A549 (cell line): ENCODE measurements at regions of chr17 and their contacts with region 1.

Region 1: GRCh38 chr17:48954300-48954755 is 9.7 kb upstream of the SNF8 start:
- DNase-seq: peak; percentile 66 to 91
- ATAC-seq: peak; percentile 94 to 98
- H3K4me3 ChIP-seq: 0 out of 3 replicates have a peak overlapping the region, but pooled peaks have one; percentile 12
- H3K27ac ChIP-seq: peak overlapping the region; percentile 78 to 82
- H3K4me1 ChIP-seq: peaks cover 49% of the 10 kb centered on the region
- CTCF ChIP-seq: peak; percentile 98
- EP300 ChIP-seq: no peak
- POLR2A ChIP-seq: no peak
- RAD21 ChIP-seq: peak; percentile 99 to 100

Region 2: DNA sequence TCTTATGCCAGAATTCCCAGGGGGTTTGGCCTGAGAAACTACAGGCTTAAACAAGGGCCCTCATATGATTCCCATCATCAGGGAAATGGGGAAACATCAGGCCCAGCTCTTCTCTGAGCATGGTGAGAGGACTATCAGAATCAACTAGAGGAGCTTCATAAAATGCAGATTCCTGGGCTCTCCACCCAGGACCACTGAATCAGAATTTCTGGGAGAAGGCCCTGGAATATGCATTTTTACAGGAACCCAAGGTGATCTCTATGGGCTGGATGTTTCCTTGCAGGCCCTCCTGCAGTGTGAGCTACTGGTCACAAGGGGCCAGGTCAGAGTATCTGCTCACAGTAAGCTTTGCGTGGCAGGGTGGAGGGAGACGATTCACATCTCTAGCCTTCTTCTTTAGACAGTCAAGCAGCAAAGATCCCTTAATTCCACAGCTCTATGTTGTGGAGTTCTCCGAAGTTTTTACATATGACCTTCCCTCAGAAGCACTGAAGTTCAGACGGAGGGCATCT is 187.0 kb before region 1 on chr17:
- CTCF ChIA-PET with region 1: no interaction called
- POLR2A ChIA-PET with region 1: no interaction called
- DNase-seq: no peak
- ATAC-seq: peak; percentile 65 to 83; a peak in 3 of 6 replicates
- H3K4me3 ChIP-seq: no peak overlapping the region
- H3K27ac ChIP-seq: no peak overlapping the region
- H3K4me1 ChIP-seq: no peaks in the 10 kb centered on the region
- CTCF ChIP-seq: no peak
- EP300 ChIP-seq: no peak
- POLR2A ChIP-seq: no peak
- RAD21 ChIP-seq: no peak

Region 3: DNA sequence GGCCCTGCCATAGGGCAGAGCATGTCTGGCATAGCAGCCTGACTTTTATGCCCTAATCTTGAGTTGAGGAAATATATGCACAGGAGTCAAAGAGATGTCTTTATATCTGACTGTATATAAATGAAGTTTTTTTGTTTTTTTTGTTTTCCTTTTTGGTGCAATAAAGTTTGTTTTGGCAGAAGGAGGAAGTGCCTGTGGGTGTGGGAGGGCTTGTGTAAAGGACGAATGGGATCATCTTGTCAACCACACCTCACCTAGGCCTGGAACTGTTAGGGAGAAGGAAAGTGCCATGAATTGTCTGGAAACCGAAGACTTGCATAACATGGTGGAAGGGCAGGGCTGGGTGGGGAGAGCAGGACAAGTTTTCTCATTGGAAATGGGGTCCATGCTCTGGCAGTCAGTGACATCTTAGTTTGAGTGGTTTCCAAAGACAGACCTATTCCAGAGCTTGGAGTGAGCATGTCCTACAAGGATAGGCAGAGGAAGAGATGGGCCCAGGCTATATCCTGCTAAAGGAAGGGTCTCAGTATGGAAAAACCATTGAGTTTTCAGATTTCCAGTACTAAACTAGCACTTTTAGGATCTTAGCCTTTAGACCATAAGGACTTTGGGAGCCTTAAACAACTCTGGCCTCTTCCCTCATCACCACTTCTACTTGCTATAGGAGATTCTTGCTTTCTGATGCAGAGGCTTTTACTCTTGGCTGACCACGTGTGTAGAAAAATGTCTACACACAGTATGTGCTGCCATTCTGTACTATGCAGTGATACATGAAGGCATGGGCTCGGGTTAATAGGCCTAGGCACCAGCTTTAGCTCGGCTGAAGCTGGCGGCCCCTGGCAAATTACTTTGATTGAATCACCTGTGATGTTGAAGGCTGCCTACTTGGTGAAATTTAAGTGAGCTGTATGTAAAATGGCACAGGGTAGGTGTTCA is 25.2 kb before region 1 on chr17:
- CTCF ChIA-PET with region 1: interaction called, 24 read pairs
- POLR2A ChIA-PET with region 1: interaction called, 6 read pairs
- DNase-seq: no peak
- ATAC-seq: peak in 1 of 2 experiments; percentile 4; a peak in 1 of 6 replicates
- H3K4me3 ChIP-seq: no peak overlapping the region
- H3K27ac ChIP-seq: no peak overlapping the region
- H3K4me1 ChIP-seq: no peaks in the 10 kb centered on the region
- CTCF ChIP-seq: no peak
- EP300 ChIP-seq: no peak
- POLR2A ChIP-seq: no peak
- RAD21 ChIP-seq: no peak

Region 4: GRCh38 chr17:48985436-48986245 is 31.3 kb after region 1 on chr17:
- CTCF ChIA-PET with region 1: interaction called, 12 read pairs
- POLR2A ChIA-PET with region 1: no interaction called
- DNase-seq: no peak
- ATAC-seq: peak; percentile 30 to 35; a peak in 3 of 6 replicates
- H3K4me3 ChIP-seq: no peak overlapping the region
- H3K27ac ChIP-seq: peak overlapping the region in 1 of 2 experiments; percentile 43; a peak in 2 of 6 replicates
- H3K4me1 ChIP-seq: peaks cover 24% of the 10 kb centered on the region
- CTCF ChIP-seq: no peak
- EP300 ChIP-seq: no peak
- POLR2A ChIP-seq: no peak
- RAD21 ChIP-seq: no peak

Region 5: GRCh38 chr17:49016788-49017463 is 62.6 kb after region 1 on chr17:
- CTCF ChIA-PET with region 1: interaction called, 66 read pairs
- POLR2A ChIA-PET with region 1: no interaction called
- DNase-seq: peak; percentile 91 to 95
- ATAC-seq: peak; percentile 64 to 74
- H3K4me3 ChIP-seq: no peak overlapping the region
- H3K27ac ChIP-seq: peak overlapping the region; percentile 60 to 77; a peak in 5 of 6 replicates
- H3K4me1 ChIP-seq: peaks cover 100% of the 10 kb centered on the region
- CTCF ChIP-seq: no peak
- EP300 ChIP-seq: no peak
- POLR2A ChIP-seq: no peak
- RAD21 ChIP-seq: peak; percentile 16 to 42; a peak in 3 of 5 replicates

Region 6: GRCh38 chr17:49038138-49038537 is 83.8 kb after region 1 on chr17:
- CTCF ChIA-PET with region 1: interaction called, 383 read pairs
- POLR2A ChIA-PET with region 1: no interaction called
- DNase-seq: no peak
- ATAC-seq: no peak
- H3K4me3 ChIP-seq: no peak overlapping the region
- H3K27ac ChIP-seq: no peak overlapping the region
- H3K4me1 ChIP-seq: no peaks in the 10 kb centered on the region
- CTCF ChIP-seq: no peak
- EP300 ChIP-seq: no peak
- POLR2A ChIP-seq: no peak
- RAD21 ChIP-seq: no peak

Region 7: GRCh38 chr17:49053171-49053829 is 99.0 kb after region 1 on chr17:
- CTCF ChIA-PET with region 1: interaction called, 10 read pairs
- POLR2A ChIA-PET with region 1: no interaction called
- DNase-seq: no peak
- ATAC-seq: peak; percentile 21 to 50; a peak in 4 of 6 replicates
- H3K4me3 ChIP-seq: no peak overlapping the region
- H3K27ac ChIP-seq: peak overlapping the region in 1 of 2 experiments; percentile 25; a peak in 1 of 6 replicates
- H3K4me1 ChIP-seq: no peaks in the 10 kb centered on the region
- CTCF ChIP-seq: no peak
- EP300 ChIP-seq: no peak
- POLR2A ChIP-seq: no peak
- RAD21 ChIP-seq: no peak